ENCODE measurements at regions of chr16 and their contacts with region 1.

Region 1: GRCh38 chr16:82043680-82044584 is 8.9 kb downstream of the HSD17B2 start:
- DNase-seq: no peak
- ATAC-seq: no peak
- H3K4me3 ChIP-seq: no peak overlapping the region
- H3K27ac ChIP-seq: no peak overlapping the region
- H3K4me1 ChIP-seq: no peaks in the 10 kb centered on the region
- H3K27me3 ChIP-seq: peaks cover 2% of the 10 kb centered on the region

Region 2: DNA sequence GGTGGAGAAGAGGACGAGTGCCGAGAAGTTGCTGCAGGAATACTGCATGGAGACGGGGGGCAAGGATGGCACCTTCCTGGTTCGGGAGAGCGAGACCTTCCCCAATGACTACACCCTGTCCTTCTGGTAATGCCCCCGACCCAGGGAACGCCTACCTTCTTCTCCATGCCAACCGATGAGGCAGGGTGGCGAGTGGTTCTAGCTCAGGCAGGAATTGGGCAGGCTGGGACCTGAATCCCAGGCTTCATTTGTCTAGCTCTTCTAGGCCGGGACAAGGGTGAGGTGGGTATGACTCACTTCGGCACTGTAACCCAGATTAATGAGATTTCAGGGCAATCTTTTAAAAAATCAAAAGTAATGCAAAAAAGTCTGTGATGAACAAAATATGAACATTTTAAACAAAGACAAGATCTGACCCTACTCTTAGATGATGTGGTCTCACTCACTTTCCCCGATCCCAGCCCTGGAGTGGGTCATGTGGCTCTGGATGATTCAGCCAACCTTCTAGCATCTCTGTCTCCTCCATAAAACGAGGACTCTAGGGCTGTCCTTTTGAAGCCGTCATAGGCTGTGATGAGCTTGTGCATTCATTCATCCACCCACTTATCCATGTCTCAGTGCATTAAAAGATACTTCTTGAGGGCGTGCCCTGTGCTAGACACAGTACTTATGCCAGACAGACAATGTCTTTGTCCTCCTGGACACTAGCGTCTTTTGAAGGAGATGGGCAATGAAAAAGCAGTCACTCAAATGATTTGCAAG is 135.3 kb before region 1 on chr16:
- intact Hi-C with region 1: no loop called
- DNase-seq: no peak
- ATAC-seq: no peak
- H3K4me3 ChIP-seq: no peak overlapping the region
- H3K27ac ChIP-seq: no peak overlapping the region
- H3K4me1 ChIP-seq: no peaks in the 10 kb centered on the region
- H3K27me3 ChIP-seq: no peaks in the 10 kb centered on the region

Region 3: DNA sequence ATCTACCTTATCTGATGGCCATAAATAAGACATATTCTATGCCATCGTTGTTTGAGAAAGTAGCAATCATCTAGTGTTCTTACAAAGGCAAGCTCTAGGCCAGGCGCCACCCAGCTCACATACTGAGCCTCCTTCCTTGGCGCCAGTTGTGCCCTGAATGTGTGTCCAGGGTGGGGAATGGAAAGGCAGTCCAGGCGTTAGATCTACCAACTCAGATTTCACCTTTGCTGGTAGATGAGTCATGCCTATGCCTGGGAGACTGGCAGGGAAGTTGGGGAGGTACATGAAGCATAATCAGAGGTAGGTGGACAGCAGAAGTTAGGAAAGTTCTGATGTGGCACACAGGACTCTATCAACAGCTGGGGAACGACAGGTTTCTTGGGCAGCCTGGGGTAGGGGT is 56.2 kb before region 1 on chr16:
- intact Hi-C with region 1: loop called in 1 of 4 experiments (anchors 10 kb)
- DNase-seq: no peak
- ATAC-seq: no peak
- H3K4me3 ChIP-seq: no peak overlapping the region
- H3K27ac ChIP-seq: no peak overlapping the region
- H3K4me1 ChIP-seq: no peaks in the 10 kb centered on the region
- H3K27me3 ChIP-seq: no peaks in the 10 kb centered on the region

Region 4: GRCh38 chr16:82219298-82219697 is 175.4 kb after region 1 on chr16:
- intact Hi-C with region 1: loop called in 1 of 4 experiments (anchors 10 kb)
- DNase-seq: peak in 1 of 3 donors; percentile 26
- ATAC-seq: peak in 1 of 2 donors; percentile 52
- H3K4me3 ChIP-seq: no peak overlapping the region
- H3K27ac ChIP-seq: no peak overlapping the region
- H3K4me1 ChIP-seq: no peaks in the 10 kb centered on the region
- H3K27me3 ChIP-seq: no peaks in the 10 kb centered on the region